Sigmoid colon (tissue), 7 donors: ENCODE measurements at regions of chr1 and their contacts with region 1.

Region 1: DNA sequence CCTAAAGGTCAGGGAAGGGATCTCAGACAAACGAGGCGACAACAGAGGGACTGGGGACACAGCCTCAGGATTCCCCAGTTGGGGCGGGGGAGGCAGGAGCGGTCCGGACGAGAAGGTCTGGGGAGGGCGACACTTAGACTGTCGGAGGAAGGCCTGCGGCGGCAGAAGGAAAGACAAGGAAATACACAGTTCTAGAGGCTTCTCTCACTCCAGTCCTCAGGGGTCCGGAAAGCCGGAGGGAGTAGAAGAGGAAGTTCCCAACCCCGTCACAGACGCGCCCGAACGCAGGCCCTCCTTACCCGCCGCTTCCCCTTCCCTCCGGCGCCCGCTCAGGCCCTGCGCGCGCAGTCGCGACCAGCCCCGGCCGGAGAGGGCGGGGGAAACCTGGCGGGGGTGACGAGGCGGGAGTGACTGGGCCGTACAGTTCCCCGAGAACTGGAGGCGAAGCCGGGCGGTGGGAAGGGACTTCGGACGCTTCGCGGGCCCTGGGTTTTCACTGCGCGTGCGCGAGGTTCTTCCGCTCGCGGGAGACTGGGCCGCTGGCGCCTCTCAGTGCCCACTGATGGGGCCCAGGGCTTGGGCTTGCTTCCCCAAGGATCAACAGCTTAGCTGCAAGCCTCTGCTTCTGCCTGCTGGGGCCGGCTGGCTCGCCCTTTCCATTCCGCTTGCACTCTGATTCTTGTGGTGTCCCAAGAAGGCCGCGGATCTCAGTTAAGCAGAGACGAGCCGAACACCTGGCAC is at the start of gene IPP:
- DNase-seq: peak; percentile 98
- H3K4me3 ChIP-seq: peak within 1 kb of the TSS; percentile 61 to 71 (median 64)
- H3K27ac ChIP-seq: peak within 1 kb of the TSS; percentile 94 to 97 (median 95)
- H3K4me1 ChIP-seq: peaks cover 0 to 13% (median 10%) of the 10 kb centered on the region in 4 donors
- H3K27me3 ChIP-seq: no peaks in the 10 kb centered on the region
- CTCF ChIP-seq: no peak
- EP300 ChIP-seq: no peak
- POLR2A ChIP-seq: peak; percentile 94 to 96
- total RNA-seq, gene IPP: 11.2 to 15.3 (median 11.6) TPM

Region 2: GRCh38 chr1:45722809-45723208 is 27.7 kb before region 1 on chr1:
- intact Hi-C with region 1: no loop called
- DNase-seq: no peak
- H3K4me3 ChIP-seq: no peak overlapping the region
- H3K27ac ChIP-seq: no peak overlapping the region
- H3K4me1 ChIP-seq: peaks cover 0 to 4% (median 0%) of the 10 kb centered on the region in 4 donors
- H3K27me3 ChIP-seq: no peaks in the 10 kb centered on the region
- CTCF ChIP-seq: no peak
- EP300 ChIP-seq: no peak
- POLR2A ChIP-seq: no peak

Region 3: GRCh38 chr1:45803301-45803780 is 52.9 kb after region 1 on chr1 and contains the start of gene MAST2:
- intact Hi-C with region 1: loop called (anchors 2 kb)
- DNase-seq: peak; percentile 94
- H3K4me3 ChIP-seq: peak within 1 kb of the TSS; percentile 46 to 60 (median 58)
- H3K27ac ChIP-seq: peak within 1 kb of the TSS; percentile 78 to 93 (median 88)
- H3K4me1 ChIP-seq: peaks cover 0 to 29% (median 20%) of the 10 kb centered on the region in 4 donors
- H3K27me3 ChIP-seq: no peaks in the 10 kb centered on the region
- CTCF ChIP-seq: no peak
- EP300 ChIP-seq: no peak
- POLR2A ChIP-seq: peak in 1 of 2 donors; percentile 39
- total RNA-seq, gene MAST2: 19.3 to 54.0 (median 30.3) TPM

Region 4: DNA sequence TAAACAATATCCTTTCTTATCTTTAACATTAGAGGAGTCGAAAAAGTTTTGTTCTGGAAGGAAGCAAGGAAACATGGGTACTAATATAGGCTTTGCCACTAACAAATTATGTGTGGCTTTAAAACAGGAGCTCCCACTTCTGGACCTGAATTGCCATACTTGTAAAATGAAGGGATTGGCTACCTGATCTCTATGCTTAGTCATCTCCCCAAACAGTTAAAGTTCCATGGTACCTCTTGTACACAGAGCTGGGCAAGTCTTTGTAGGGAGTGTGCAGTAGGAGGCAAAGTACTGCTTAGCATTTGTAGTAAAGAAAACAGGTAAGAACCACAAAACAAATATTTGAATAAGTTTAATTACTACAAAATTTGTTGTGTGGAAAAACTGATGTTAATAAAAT is 134.2 kb after region 1 on chr1:
- intact Hi-C with region 1: loop called (anchors 5 kb)
- DNase-seq: no peak
- H3K4me3 ChIP-seq: no peak overlapping the region
- H3K27ac ChIP-seq: no peak overlapping the region
- H3K4me1 ChIP-seq: peaks cover 0 to 19% (median 5%) of the 10 kb centered on the region in 4 donors
- H3K27me3 ChIP-seq: no peaks in the 10 kb centered on the region
- CTCF ChIP-seq: no peak
- EP300 ChIP-seq: no peak
- POLR2A ChIP-seq: no peak

Region 5: DNA sequence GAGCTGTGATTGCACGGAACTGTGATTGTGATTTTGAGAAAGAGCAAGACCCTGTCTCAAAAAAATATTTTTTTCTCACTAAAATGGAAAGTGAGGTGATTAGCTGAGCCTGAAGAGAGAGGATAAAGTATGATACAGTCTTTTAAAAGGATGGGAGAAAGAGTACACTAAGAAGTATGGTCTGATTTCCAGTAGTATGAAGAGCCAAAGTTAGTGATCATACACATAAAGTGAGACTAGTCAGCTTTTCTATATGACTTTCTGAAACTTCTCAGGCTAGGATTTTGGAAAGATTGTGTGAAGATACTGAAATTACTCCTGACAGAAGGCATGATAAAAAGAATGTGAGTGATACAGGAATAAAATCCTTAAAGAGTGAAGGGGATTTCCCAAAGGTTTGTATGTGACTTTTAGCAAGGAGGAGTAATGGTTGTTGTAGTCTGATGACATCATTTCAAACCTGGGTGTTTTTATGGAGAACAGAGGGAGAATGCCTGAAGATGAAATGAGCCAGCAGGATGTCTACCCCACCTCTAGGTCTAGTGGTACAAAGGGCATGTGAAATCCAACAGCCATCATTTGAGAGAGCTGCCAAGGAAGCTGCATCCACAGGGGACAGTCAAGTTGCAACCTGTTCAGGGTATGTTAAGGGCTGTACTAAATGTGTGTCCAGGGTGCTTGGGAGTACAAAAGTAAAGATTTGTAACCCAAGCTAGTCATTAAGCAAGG is 224.2 kb after region 1 on chr1:
- intact Hi-C with region 1: loop called (anchors 5 kb)
- DNase-seq: no peak
- H3K4me3 ChIP-seq: no peak overlapping the region
- H3K27ac ChIP-seq: no peak overlapping the region
- H3K4me1 ChIP-seq: peaks cover 0 to 30% (median 20%) of the 10 kb centered on the region in 4 donors
- H3K27me3 ChIP-seq: no peaks in the 10 kb centered on the region
- CTCF ChIP-seq: no peak
- EP300 ChIP-seq: no peak
- POLR2A ChIP-seq: no peak

Region 6: DNA sequence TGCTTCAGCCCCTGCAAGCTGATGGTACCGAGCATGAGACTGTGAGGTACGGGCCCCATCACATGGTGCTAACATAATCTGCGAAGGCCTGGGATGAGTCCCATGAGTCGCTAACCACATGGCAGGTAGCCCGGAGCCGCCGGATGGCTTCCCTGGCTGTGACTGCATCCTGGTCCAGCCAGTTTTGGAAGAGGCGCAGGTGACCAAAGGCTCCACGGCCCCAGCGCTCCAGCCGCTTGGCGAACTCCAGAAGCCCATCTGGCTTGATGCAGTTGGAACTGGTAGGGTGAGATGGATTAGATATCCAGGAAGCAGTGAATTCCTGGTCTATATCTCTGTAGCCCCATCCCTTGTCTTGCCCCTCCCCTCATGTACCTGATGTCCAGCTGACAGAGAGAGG is 528.3 kb after region 1 on chr1:
- intact Hi-C with region 1: no loop called
- DNase-seq: no peak
- H3K4me3 ChIP-seq: no peak overlapping the region
- H3K27ac ChIP-seq: no peak overlapping the region
- H3K4me1 ChIP-seq: no peaks in the 10 kb centered on the region
- H3K27me3 ChIP-seq: no peaks in the 10 kb centered on the region
- CTCF ChIP-seq: no peak
- EP300 ChIP-seq: no peak
- POLR2A ChIP-seq: no peak